ENCODE measurements at regions of chr13 and their contacts with region 1.

Region 1: GRCh38 chr13:97432917-97433726 is 847 bp upstream of the RAP2A start:
- DNase-seq: peak; percentile 98
- H3K4me3 Mint-ChIP-seq: peak overlapping the region; percentile 86
- H3K27ac Mint-ChIP-seq: peak overlapping the region; percentile 95
- H3K4me1 Mint-ChIP-seq: peaks cover 22% of the 10 kb centered on the region
- H3K27me3 Mint-ChIP-seq: no peaks in the 10 kb centered on the region

Region 2: GRCh38 chr13:97109841-97110492 is 323.2 kb before region 1 on chr13:
- CTCF ChIA-PET with region 1: no interaction called
- intact Hi-C with region 1: loop called (anchors 2 kb)
- DNase-seq: peak; percentile 79
- H3K4me3 Mint-ChIP-seq: peak overlapping the region; percentile 14
- H3K27ac Mint-ChIP-seq: no peak overlapping the region
- H3K4me1 Mint-ChIP-seq: peaks cover 11% of the 10 kb centered on the region
- H3K27me3 Mint-ChIP-seq: peaks cover 12% of the 10 kb centered on the region

Region 3: DNA sequence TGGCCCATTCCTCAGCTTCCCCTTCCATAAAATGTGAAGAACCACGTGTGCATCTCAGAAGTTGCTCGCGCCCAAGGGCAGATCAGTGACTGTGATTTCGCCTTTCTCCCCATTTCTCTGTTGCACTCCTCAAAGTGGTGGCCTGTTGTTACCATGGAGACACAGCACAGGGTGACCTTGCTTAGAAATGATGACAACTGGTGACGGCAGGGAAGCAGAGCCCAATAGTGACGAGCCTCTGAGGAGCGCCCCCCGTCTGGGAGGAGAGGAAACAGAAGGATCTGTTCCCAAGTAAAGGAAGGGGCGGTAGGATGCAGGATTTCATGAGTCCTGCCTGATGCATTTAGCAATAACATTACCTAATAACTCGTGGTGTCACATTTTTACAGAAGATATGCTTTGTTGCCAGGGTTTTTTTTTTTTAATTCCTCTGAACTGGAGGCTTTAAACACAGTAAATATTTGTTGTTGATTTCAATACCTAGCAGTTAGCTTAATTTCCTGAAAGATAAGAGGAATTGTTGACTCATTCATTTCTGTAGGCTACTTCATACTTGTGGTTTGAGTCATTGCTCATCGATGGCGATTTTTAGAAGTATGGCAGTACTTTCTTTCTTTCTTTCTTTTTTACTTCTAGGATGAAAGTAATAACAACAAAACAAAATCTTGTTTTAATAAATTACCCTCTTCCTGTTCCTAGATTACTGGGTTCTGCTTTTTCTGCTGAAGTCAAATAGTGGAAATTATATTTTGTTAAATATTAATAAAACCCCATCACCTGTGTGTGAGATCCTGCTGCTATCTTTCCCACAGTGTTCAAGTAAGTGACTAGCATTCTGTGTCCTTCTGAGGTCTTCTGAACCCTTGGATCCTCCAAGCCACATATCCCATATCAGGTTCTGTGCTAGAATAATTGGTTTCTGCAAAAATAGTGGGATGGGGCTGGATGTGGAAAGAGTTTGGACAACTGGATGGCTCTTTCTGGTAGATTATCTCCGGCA is 175.0 kb before region 1 on chr13:
- CTCF ChIA-PET with region 1: no interaction called
- intact Hi-C with region 1: loop called (anchors 1 kb)
- DNase-seq: no peak
- H3K4me3 Mint-ChIP-seq: no peak overlapping the region
- H3K27ac Mint-ChIP-seq: no peak overlapping the region
- H3K4me1 Mint-ChIP-seq: peaks cover 74% of the 10 kb centered on the region
- H3K27me3 Mint-ChIP-seq: no peaks in the 10 kb centered on the region

Region 4: GRCh38 chr13:97460004-97460775 is 27.1 kb after region 1 on chr13:
- CTCF ChIA-PET with region 1: interaction called, 3 read pairs
- intact Hi-C with region 1: loop called (anchors 1 kb)
- DNase-seq: peak; percentile 18
- H3K4me3 Mint-ChIP-seq: no peak overlapping the region
- H3K27ac Mint-ChIP-seq: peak overlapping the region; percentile 8
- H3K4me1 Mint-ChIP-seq: peaks cover 31% of the 10 kb centered on the region
- H3K27me3 Mint-ChIP-seq: no peaks in the 10 kb centered on the region

Region 5: GRCh38 chr13:97798836-97799235 is 365.7 kb after region 1 on chr13:
- CTCF ChIA-PET with region 1: no interaction called
- intact Hi-C with region 1: loop called (anchors 1 kb)
- DNase-seq: no peak
- H3K4me3 Mint-ChIP-seq: no peak overlapping the region
- H3K27ac Mint-ChIP-seq: no peak overlapping the region
- H3K4me1 Mint-ChIP-seq: no peaks in the 10 kb centered on the region
- H3K27me3 Mint-ChIP-seq: peaks cover 21% of the 10 kb centered on the region

Region 6: GRCh38 chr13:99087096-99087953 is 1654.2 kb after region 1 on chr13:
- CTCF ChIA-PET with region 1: no interaction called
- intact Hi-C with region 1: loop called (anchors 10 kb)
- DNase-seq: peak; percentile 94
- H3K4me3 Mint-ChIP-seq: peak overlapping the region; percentile 99
- H3K27ac Mint-ChIP-seq: peak overlapping the region; percentile 97
- H3K4me1 Mint-ChIP-seq: peaks cover 30% of the 10 kb centered on the region
- H3K27me3 Mint-ChIP-seq: no peaks in the 10 kb centered on the region